Right cardiac atrium (tissue), 5 donors: ENCODE measurements at regions of chr19 and their contacts with region 1.

Region 1: DNA sequence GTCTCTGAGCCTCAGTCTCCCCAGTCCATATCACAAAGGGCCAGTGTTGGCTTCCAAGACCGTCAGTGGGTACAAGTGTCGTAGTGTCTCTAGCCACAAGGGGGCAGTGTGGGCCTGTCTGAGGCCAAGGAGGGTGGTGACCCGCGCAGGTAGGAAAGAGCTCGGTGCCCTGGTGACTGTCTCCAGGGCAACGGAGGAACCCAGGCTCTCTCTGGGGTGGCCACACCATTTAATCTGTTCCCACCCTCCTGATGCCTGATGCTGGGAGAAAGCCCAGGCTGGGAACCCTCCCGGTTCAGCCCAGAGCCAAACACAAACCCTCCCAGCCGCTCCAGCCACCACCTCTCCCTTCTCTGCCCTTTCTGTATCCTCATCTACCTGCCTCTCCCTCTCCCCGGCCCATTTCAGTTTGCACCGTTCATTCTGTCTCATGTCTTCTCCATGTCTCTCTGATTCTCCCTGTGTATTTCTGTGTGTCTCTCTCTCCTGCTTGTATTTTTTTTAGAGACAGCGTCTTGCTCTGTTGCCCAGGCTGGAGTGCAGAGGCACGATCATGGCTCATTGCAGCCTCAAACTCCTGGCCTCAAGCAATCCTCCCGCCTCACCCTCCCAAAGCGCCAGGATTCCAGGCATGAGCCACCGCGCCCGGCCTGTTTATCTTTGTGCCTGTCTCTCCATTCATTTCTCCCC is 17.5 kb upstream of the MEIS3 start:
- DNase-seq: peak; percentile 75 to 88 (median 83)
- ATAC-seq: peak; percentile 83 to 92
- H3K4me3 ChIP-seq: no peak overlapping the region
- H3K27ac ChIP-seq: no peak overlapping the region
- H3K4me1 ChIP-seq: no peaks in the 10 kb centered on the region
- H3K27me3 ChIP-seq: no peaks in the 10 kb centered on the region

Region 2: GRCh38 chr19:47305309-47305751 is 131.5 kb before region 1 on chr19:
- intact Hi-C with region 1: no loop called
- DNase-seq: peak; percentile 56 to 87 (median 86)
- ATAC-seq: peak; percentile 33 to 51
- H3K4me3 ChIP-seq: no peak overlapping the region
- H3K27ac ChIP-seq: no peak overlapping the region
- H3K4me1 ChIP-seq: no peaks in the 10 kb centered on the region
- H3K27me3 ChIP-seq: no peaks in the 10 kb centered on the region

Region 3: GRCh38 chr19:47514869-47515588 is 78.2 kb after region 1 on chr19 and contains the start of gene NAPA:
- intact Hi-C with region 1: loop called in 2 of 4 experiments (anchors 10 kb)
- DNase-seq: peak; percentile 100
- ATAC-seq: peak; percentile 98
- H3K4me3 ChIP-seq: peak within 1 kb of the TSS; percentile 47
- H3K27ac ChIP-seq: peak within 1 kb of the TSS; percentile 78
- H3K4me1 ChIP-seq: peaks cover 30% of the 10 kb centered on the region
- H3K27me3 ChIP-seq: no peaks in the 10 kb centered on the region
- total RNA-seq, gene NAPA: 91.7 to 111 (median 105) TPM

Region 4: DNA sequence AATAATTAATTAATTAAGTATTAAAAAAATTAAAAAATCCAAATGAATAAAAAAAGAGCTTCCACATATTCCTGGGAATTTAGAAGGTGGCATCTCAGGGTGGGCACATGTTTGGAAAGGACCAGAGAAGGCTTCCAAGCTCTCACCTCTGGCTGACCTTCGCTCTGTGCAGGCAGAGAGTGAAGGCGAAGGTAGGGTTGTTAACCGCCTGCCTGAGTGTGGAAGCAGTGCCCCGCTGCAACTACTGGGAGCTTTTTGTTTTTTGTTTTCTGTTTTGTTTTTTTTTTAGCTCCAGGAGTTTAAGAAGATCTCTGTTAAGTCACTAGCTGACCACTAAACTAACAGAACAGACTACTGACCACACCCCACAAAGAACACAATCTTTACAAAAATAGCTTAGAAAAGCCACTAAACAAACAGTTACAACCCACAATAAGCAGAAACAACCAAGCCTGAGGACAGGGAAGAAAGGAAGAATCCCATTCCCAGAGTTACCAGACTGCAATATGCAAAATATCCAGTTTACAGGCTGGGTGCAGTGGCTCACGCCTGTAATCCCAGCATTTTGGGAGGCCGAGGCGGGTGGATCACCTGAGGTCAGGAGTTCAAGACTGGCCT is 124.7 kb after region 1 on chr19:
- intact Hi-C with region 1: no loop called
- DNase-seq: no peak
- ATAC-seq: no peak
- H3K4me3 ChIP-seq: no peak overlapping the region
- H3K27ac ChIP-seq: no peak overlapping the region
- H3K4me1 ChIP-seq: no peaks in the 10 kb centered on the region
- H3K27me3 ChIP-seq: no peaks in the 10 kb centered on the region

Region 5: DNA sequence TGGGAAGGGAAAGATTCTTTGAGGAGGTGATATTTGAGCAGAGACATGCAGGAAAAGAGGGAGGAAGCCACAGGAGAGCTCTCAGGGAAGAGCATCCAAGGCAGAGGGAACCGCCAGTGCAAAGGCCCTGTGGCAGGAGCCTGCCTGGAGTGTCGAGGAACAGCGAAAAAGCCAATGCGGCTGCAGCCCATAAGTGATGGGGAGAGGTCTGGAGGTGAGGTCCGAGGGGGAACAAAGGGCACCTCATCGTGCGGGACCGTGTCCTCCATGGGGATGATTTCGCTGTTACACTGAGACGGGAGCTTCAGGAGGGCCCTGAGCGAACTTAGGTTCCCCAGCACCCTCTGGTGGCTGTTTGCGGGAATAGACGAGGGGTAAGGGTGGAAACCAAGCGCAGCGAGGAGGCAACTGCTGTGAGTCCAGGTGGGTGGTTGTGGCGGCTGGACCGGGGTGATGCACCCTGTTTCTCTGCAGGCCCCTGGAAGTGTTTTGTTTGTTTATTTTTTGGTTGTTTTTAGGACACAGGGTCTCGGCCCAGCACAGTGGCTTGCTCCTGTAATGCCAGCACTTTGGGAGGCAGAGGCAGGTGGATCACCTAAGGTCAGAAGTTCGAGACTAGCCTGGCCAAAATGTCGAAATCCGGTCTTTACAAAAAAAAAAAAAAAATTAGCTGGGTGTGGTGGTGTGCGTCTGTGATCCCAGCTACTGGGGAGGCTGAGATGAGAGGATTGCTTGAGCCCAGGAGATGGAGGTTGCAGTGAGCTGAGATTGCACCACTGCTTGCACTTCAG is 270.5 kb after region 1 on chr19:
- intact Hi-C with region 1: loop called in 1 of 4 experiments (anchors 2 kb)
- DNase-seq: peak; percentile 72 to 84 (median 83)
- ATAC-seq: peak; percentile 80 to 82
- H3K4me3 ChIP-seq: no peak overlapping the region
- H3K27ac ChIP-seq: no peak overlapping the region
- H3K4me1 ChIP-seq: no peaks in the 10 kb centered on the region
- H3K27me3 ChIP-seq: no peaks in the 10 kb centered on the region